ENCODE measurements at regions of chr19 and their contacts with region 1.

Region 1: DNA sequence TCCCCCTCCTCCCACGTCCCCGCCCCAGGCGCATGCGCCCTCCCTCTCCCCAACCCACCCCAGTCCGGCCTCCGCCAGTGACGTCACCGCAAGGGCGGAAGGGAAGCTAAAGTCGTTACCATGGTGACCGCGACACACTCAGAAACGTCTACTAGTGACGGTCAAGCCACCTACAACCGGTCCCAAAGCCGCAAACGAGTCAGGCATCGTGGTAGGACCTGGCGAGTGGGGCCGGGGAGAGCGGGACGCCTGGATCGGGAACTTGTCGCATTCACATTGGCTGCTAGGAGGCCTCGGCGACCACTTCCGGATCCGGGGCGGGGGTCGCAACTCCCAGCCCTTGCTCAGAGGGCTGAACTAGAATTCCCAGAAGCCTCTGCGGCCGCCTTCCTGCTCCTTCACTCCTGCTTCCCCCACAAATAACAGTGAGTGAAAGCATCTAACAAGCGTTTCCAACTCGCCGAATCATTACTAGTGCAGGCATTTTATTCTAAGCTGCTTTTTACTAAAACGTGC is at the start of gene ZSCAN5A:
- DNase-seq: peak; percentile 99
- ATAC-seq: peak; percentile 80
- H3K4me3 Mint-ChIP-seq: peak within 1 kb of the TSS; percentile 83
- H3K27ac Mint-ChIP-seq: peak within 1 kb of the TSS; percentile 100
- H3K4me1 Mint-ChIP-seq: peaks cover 23% of the 10 kb centered on the region
- H3K27me3 Mint-ChIP-seq: no peaks in the 10 kb centered on the region
- total RNA-seq, gene ZSCAN5A: 8.3 to 9.9 TPM

Region 2: GRCh38 chr19:55516878-55517620 is 797.6 kb before region 1 on chr19:
- CTCF ChIA-PET with region 1: no interaction called
- POLR2A ChIA-PET with region 1: no interaction called
- intact Hi-C with region 1: no loop called
- DNase-seq: peak; percentile 96
- ATAC-seq: peak; percentile 100
- H3K4me3 Mint-ChIP-seq: peak overlapping the region; percentile 54
- H3K27ac Mint-ChIP-seq: peak overlapping the region; percentile 9
- H3K4me1 Mint-ChIP-seq: peaks cover 3% of the 10 kb centered on the region
- H3K27me3 Mint-ChIP-seq: no peaks in the 10 kb centered on the region

Region 3: DNA sequence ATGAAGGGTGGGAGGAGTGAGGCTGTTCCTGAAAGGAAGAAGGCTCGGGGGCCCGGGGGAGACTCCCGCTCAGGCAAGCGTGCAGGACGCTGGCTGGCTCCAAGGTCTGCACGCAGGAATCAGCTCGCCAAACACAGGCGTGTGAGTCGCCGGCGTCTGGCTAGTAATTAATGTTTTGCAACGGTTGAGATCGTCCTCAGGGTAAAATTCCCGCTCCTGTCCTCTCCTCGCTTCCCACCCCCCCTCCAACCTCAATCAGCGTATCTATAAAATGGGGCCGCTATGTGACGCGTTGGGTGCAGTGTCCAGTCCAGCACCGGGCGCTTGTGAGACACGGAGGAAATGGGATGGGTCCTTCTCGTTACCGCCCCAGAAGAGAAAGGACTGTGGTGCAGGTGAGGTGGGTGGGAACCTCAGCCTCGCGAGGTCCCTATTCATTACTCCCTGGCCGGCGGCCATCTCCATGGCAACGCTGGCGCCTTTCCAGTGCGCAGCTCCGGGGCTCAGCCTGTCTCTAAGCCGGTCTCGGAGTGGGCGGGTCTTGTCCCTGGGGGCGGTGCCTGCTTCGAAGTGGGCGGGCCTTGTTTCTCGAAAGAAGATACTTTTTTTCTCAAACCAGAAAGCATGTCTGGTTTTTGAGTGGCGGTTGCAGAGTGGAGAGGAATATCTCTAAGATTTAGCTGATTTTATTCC is 727.5 kb before region 1 on chr19:
- CTCF ChIA-PET with region 1: no interaction called
- POLR2A ChIA-PET with region 1: no interaction called
- intact Hi-C with region 1: loop called in 1 of 2 experiments (anchors 5 kb)
- DNase-seq: peak; percentile 97
- ATAC-seq: peak; percentile 99
- H3K4me3 Mint-ChIP-seq: peak overlapping the region; percentile 71
- H3K27ac Mint-ChIP-seq: peak overlapping the region; percentile 37
- H3K4me1 Mint-ChIP-seq: peaks cover 20% of the 10 kb centered on the region
- H3K27me3 Mint-ChIP-seq: no peaks in the 10 kb centered on the region

Region 4: GRCh38 chr19:56140583-56141416 is 173.8 kb before region 1 on chr19 and contains the start of gene ZNF444:
- CTCF ChIA-PET with region 1: interaction called, 5 read pairs
- POLR2A ChIA-PET with region 1: interaction called, 3 read pairs
- intact Hi-C with region 1: loop called (anchors 1 kb)
- DNase-seq: peak; percentile 99
- ATAC-seq: peak; percentile 90
- H3K4me3 Mint-ChIP-seq: peak within 1 kb of the TSS; percentile 89
- H3K27ac Mint-ChIP-seq: peak within 1 kb of the TSS; percentile 94
- H3K4me1 Mint-ChIP-seq: peaks cover 31% of the 10 kb centered on the region
- H3K27me3 Mint-ChIP-seq: no peaks in the 10 kb centered on the region
- total RNA-seq, gene ZNF444: 29.2 to 32.2 TPM

Region 5: GRCh38 chr19:56383826-56384605 is 69.4 kb after region 1 on chr19:
- CTCF ChIA-PET with region 1: no interaction called
- POLR2A ChIA-PET with region 1: no interaction called
- intact Hi-C with region 1: no loop called
- DNase-seq: no peak
- ATAC-seq: no peak
- H3K4me3 Mint-ChIP-seq: no peak overlapping the region
- H3K27ac Mint-ChIP-seq: no peak overlapping the region
- H3K4me1 Mint-ChIP-seq: peaks cover 7% of the 10 kb centered on the region
- H3K27me3 Mint-ChIP-seq: no peaks in the 10 kb centered on the region

Region 6: GRCh38 chr19:56403764-56404704 is 89.4 kb after region 1 on chr19 and contains the start of gene ZNF583:
- CTCF ChIA-PET with region 1: no interaction called
- POLR2A ChIA-PET with region 1: no interaction called
- intact Hi-C with region 1: loop called in 1 of 2 experiments (anchors 1 kb)
- DNase-seq: peak; percentile 94
- ATAC-seq: peak; percentile 84
- H3K4me3 Mint-ChIP-seq: peak within 1 kb of the TSS; percentile 80
- H3K27ac Mint-ChIP-seq: peak within 1 kb of the TSS; percentile 80
- H3K4me1 Mint-ChIP-seq: peaks cover 32% of the 10 kb centered on the region
- H3K27me3 Mint-ChIP-seq: no peaks in the 10 kb centered on the region
- total RNA-seq, gene ZNF583: 2.1 to 3.0 TPM

Region 7: GRCh38 chr19:56594783-56595547 is 280.3 kb after region 1 on chr19 and contains the start of gene ZNF71:
- CTCF ChIA-PET with region 1: no interaction called
- POLR2A ChIA-PET with region 1: interaction called, 3 read pairs
- intact Hi-C with region 1: loop called in 1 of 2 experiments (anchors 1 kb)
- DNase-seq: peak; percentile 94
- ATAC-seq: peak; percentile 98
- H3K4me3 Mint-ChIP-seq: peak within 1 kb of the TSS; percentile 87
- H3K27ac Mint-ChIP-seq: peak within 1 kb of the TSS; percentile 71
- H3K4me1 Mint-ChIP-seq: peaks cover 19% of the 10 kb centered on the region
- H3K27me3 Mint-ChIP-seq: no peaks in the 10 kb centered on the region
- total RNA-seq, gene ZNF71: 4.4 to 4.6 TPM

Region 8: DNA sequence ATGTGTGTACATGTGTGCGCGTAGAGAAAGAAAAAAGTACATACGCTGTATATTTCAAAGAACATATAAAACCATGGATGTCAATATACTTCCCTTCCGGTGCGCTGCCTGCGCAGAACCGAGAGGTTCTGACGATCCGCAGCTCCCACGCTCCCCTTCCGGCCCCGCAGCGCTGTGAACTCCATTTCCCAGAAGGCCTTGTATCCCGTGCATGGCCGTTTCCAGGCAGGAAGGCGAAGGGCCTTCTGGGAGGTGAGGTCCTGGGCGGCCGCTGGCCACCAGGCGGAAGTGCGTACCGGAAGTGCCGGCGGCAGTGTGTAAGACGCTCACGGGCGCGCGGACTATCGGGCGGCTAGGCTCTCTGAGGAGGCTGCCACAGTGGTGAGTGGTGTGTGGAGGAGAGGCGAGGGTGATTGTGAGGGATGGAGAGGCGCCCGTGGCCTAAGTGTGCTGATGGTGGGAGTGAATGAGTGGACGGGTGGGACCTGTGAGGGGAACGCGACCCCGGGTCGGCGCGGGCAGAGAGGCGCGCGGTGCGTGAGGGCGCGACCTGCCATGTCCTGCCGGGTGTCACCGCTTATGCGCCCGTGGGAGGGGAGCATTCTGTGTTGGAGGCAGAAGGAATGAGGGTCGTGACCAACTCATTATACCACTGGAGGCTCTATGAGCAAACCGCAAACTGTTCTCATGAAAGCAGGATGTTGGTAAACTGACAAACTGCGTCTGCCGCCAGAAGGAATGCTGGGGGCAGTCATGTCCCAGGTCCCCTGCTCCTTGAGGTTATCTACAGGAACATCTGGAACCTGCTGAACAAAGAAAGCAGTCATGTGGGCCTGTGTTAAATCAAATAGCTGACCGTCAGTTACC is 1990.7 kb after region 1 on chr19 and contains the start of gene ERVK3-1:
- CTCF ChIA-PET with region 1: no interaction called
- POLR2A ChIA-PET with region 1: no interaction called
- intact Hi-C with region 1: loop called in 1 of 2 experiments (anchors 5 kb)
- DNase-seq: peak; percentile 97
- ATAC-seq: peak; percentile 98
- H3K4me3 Mint-ChIP-seq: peak within 1 kb of the TSS; percentile 99
- H3K27ac Mint-ChIP-seq: peak within 1 kb of the TSS; percentile 100
- H3K4me1 Mint-ChIP-seq: peaks cover 52% of the 10 kb centered on the region
- H3K27me3 Mint-ChIP-seq: no peaks in the 10 kb centered on the region
- total RNA-seq, gene ERVK3-1: 38.6 to 53.6 TPM

Measured in activated CD4-positive, alpha-beta T cell treated with anti-CD3 and anti-CD28 coated beads for 36 hours (primary cell).